ENCODE measurements at regions of chr10 and their contacts with region 1.

Region 1: DNA sequence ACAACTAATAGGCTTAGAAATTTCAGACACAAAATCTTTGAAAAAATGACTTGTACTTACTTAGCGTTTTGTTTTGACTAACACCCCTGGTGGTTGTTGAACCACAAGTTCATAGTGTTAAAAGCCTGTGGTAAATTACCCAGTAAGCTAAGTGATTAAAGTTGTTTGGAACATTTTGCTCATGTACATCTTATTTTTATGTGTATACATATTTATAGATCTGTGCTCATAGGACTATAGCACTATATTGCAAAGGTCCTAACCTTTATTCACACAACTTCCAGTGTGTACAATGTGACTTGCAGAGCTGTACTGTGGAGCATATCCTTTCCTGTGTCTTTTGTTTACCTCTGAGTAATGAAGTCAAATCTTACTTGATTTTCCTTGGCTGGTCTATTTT is 79.6 kb downstream of the BMPR1A start:
- DNase-seq: no peak
- H3K4me3 ChIP-seq: no peak overlapping the region
- H3K27ac ChIP-seq: no peak overlapping the region
- H3K4me1 ChIP-seq: no peaks in the 10 kb centered on the region
- H3K27me3 ChIP-seq: no peaks in the 10 kb centered on the region
- CTCF ChIP-seq: no peak

Region 2: DNA sequence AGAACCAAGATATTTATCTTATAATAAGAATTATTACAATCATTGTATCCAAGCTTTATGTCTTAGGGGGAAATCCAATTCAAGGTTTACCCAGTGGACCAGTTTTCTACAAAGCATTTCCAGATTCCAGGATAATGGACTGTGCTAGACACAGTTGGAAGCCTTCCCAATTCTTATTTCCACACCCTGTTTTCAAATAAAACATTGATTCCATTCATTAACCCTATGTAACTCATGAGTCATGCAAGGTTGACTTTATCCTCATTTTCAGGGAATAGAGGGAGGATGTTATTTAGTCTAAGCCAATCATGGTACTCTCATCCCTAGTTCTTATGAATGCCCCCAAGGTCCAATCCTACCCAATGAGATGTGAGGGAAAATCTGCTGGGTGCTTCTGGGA is 1601.4 kb after region 1 on chr10:
- CTCF ChIA-PET with region 1: interaction called, 13 read pairs
- dilution Hi-C with region 1: no loop called
- in situ Hi-C with region 1: no loop called
- intact Hi-C with region 1: no loop called
- DNase-seq: peak; percentile 47
- H3K4me3 ChIP-seq: no peak overlapping the region
- H3K27ac ChIP-seq: no peak overlapping the region
- H3K4me1 ChIP-seq: peaks cover 5% of the 10 kb centered on the region
- H3K27me3 ChIP-seq: no peaks in the 10 kb centered on the region
- CTCF ChIP-seq: no peak

Measured in mammary epithelial cell (primary cell).